ENCODE measurements at regions of chr5 and their contacts with region 1.

Region 1: DNA sequence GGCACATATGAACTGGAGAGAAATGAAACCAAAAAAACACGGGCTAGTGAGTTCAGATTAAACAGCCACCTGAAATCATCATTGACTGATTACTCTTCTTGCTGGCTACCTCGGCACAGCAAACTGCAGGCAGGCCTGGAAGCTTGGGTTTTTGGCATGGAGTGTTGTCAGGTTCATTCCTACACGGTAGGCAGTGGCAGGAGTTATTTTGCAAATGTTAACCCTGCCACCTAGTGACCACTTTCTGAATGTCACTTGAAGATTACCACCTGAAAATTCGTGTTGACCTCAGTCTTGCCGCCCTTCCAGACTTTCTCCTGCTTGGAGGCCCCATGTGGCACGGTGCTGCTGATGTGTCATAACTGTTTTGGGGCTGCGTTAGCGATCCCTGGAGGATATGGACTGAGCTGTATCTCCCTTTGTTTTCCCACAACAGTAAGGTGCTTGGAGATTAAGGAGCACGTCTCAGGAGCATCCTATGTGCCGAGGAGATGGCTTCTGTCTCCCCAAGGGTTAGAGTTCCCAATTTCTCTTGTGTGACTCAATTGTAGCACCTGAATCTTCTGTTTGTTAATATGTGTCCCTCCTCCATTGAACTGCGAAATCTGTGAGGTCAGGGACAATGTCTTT is 12.7 kb upstream of the CD180 start:
- DNase-seq: peak; percentile 71
- ATAC-seq: peak; percentile 39
- H3K4me3 Mint-ChIP-seq: no peak overlapping the region
- H3K27ac Mint-ChIP-seq: peak overlapping the region; percentile 76
- H3K4me1 Mint-ChIP-seq: peaks cover 56% of the 10 kb centered on the region
- H3K27me3 Mint-ChIP-seq: no peaks in the 10 kb centered on the region

Region 2: GRCh38 chr5:66553916-66554575 is 655.2 kb before region 1 on chr5:
- CTCF ChIA-PET with region 1: no interaction called
- POLR2A ChIA-PET with region 1: no interaction called
- intact Hi-C with region 1: loop called in 1 of 2 experiments (anchors 2 kb)
- DNase-seq: peak; percentile 71
- ATAC-seq: peak; percentile 90
- H3K4me3 Mint-ChIP-seq: no peak overlapping the region
- H3K27ac Mint-ChIP-seq: peak overlapping the region; percentile 51
- H3K4me1 Mint-ChIP-seq: peaks cover 30% of the 10 kb centered on the region
- H3K27me3 Mint-ChIP-seq: peaks cover 24% of the 10 kb centered on the region

Region 3: DNA sequence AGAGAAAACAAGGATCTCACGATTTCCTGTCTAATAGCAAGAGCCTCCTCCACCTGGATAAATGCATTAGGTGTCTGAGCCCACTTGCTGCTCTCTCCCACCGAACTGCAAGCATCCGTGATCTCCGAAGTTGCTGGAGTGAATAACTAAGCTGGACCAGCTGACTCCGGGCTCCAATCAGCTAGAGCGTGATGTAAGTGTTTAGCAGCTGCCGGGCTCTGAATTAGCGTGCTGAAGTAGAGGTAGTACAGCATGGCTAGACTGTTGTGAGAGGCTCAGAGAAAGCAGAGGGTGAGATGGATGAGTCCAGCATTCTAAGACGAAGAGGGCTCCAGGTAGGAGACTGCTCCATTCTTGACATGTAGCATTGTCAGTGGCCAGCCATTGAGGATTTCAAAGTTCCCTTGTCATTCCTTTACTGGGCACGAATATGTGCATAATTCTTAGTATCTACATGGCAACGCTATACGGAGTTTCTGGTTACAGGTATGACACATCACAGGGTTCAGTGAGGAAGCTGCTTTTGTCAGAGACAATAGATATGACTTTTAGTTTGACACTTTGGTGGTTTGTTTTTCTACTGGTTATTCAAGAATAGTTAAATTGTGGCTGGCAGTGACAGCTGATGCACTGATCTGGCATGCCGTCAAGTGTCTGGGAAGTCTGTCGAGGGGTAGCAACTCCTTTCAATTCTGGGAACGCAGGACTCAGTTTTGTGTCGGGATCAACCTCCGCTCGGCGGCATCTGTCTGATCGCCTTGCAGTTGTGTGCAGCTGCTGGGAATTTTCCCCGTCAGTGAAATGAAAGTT is 380.5 kb before region 1 on chr5:
- CTCF ChIA-PET with region 1: no interaction called
- POLR2A ChIA-PET with region 1: no interaction called
- intact Hi-C with region 1: loop called in 1 of 2 experiments (anchors 2 kb)
- DNase-seq: peak; percentile 82
- ATAC-seq: peak; percentile 93
- H3K4me3 Mint-ChIP-seq: peak overlapping the region; percentile 82
- H3K27ac Mint-ChIP-seq: peak overlapping the region; percentile 83
- H3K4me1 Mint-ChIP-seq: peaks cover 25% of the 10 kb centered on the region
- H3K27me3 Mint-ChIP-seq: peaks cover 27% of the 10 kb centered on the region

Region 4: DNA sequence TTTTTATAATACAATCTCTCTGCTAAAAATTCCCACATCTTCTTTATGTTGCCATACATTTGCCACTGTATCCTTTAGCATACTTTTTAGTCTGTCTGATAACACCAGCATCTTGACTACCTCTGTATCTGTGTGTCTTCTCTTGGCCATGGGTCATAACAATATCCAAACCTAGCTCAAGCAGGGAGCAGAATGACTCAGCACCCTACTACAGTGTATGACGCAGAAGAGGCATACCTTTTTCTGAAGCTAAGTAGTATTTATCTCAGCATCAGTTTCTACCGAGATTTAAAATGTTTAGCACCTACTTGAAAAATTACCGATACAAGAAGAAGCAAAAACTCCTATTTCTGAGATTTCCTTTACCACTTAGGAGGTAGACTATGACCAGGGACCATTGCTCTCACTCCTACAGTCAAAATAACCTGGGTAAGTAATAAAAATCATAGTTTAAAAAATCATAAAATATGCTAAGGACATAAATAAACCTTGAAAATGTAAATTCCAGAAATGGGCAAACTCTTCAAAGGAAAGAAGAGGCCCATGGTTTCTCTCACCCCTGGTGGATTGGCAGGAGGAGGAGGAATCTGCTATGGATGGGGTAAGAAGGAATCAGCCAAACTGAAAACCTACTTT is 326.5 kb before region 1 on chr5:
- CTCF ChIA-PET with region 1: no interaction called
- POLR2A ChIA-PET with region 1: no interaction called
- intact Hi-C with region 1: no loop called
- DNase-seq: peak; percentile 41
- ATAC-seq: peak; percentile 95
- H3K4me3 Mint-ChIP-seq: no peak overlapping the region
- H3K27ac Mint-ChIP-seq: no peak overlapping the region
- H3K4me1 Mint-ChIP-seq: peaks cover 9% of the 10 kb centered on the region
- H3K27me3 Mint-ChIP-seq: peaks cover 8% of the 10 kb centered on the region

Region 5: GRCh38 chr5:66987949-66988838 is 221.1 kb before region 1 on chr5:
- CTCF ChIA-PET with region 1: interaction called, 10 read pairs
- POLR2A ChIA-PET with region 1: no interaction called
- intact Hi-C with region 1: loop called (anchors 1 kb)
- DNase-seq: no peak
- ATAC-seq: peak; percentile 69
- H3K4me3 Mint-ChIP-seq: no peak overlapping the region
- H3K27ac Mint-ChIP-seq: no peak overlapping the region
- H3K4me1 Mint-ChIP-seq: peaks cover 2% of the 10 kb centered on the region
- H3K27me3 Mint-ChIP-seq: no peaks in the 10 kb centered on the region

Region 6: GRCh38 chr5:67156976-67157583 is 52.2 kb before region 1 on chr5:
- CTCF ChIA-PET with region 1: interaction called, 276 read pairs
- POLR2A ChIA-PET with region 1: interaction called, 4 read pairs
- intact Hi-C with region 1: loop called (anchors 1 kb)
- DNase-seq: peak; percentile 65
- ATAC-seq: peak; percentile 40
- H3K4me3 Mint-ChIP-seq: no peak overlapping the region
- H3K27ac Mint-ChIP-seq: peak overlapping the region; percentile 1
- H3K4me1 Mint-ChIP-seq: peaks cover 40% of the 10 kb centered on the region
- H3K27me3 Mint-ChIP-seq: no peaks in the 10 kb centered on the region

Region 7: DNA sequence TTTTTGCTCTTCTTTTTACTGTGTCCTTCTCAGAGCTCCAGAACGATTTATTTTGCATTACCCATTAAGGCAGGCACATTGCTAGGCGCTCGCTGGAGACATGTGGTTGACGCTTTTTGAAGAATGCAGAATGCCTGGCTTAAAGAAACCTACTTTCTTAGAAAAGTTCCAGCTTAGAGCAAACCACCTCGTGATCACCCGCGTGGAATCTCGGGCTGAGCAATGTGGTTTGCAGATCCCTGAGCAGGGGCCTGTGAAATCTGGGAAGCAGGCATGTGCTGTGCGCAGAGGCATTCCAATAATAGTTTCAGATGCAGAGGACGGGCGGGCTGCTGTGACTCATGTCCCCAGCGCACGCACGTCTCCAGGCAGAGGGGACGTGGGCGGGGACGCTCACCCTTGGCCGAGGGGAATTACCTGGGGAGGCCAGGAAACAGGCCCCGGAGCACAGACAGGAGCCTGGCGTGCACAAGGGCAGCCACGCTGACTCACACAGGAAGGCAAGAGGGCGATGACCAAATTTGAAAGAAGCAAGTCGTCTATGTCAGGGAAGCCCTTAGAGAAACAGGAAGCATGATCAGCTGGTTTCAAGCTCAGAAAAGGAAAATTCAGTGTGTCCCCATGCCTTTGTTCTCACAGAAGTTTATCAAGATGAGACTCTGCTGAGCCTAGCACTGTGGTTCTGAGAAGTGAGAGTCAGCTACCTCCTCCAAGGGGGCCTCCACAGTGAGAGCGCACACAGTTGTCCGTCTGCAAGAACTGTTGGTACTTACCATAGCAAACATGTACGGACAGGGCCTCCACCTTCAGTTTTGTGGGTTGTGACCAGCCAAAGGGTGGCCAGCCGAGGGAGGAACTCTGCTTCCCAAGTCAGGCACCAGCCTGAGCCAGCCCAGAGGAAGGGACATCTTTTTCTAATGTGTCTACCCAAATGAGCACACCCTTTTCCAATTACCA is 1224.9 kb after region 1 on chr5:
- CTCF ChIA-PET with region 1: no interaction called
- POLR2A ChIA-PET with region 1: interaction called, 4 read pairs
- intact Hi-C with region 1: loop called in 1 of 2 experiments (anchors 10 kb)
- DNase-seq: peak; percentile 98
- ATAC-seq: peak; percentile 96
- H3K4me3 Mint-ChIP-seq: peak overlapping the region; percentile 37
- H3K27ac Mint-ChIP-seq: peak overlapping the region; percentile 84
- H3K4me1 Mint-ChIP-seq: peaks cover 57% of the 10 kb centered on the region
- H3K27me3 Mint-ChIP-seq: peaks cover 12% of the 10 kb centered on the region

Measured in activated CD4-positive, alpha-beta T cell treated with anti-CD3 and anti-CD28 coated beads for 36 hours (primary cell).